ENCODE measurements at regions of chr2 and their contacts with region 1.

Region 1: DNA sequence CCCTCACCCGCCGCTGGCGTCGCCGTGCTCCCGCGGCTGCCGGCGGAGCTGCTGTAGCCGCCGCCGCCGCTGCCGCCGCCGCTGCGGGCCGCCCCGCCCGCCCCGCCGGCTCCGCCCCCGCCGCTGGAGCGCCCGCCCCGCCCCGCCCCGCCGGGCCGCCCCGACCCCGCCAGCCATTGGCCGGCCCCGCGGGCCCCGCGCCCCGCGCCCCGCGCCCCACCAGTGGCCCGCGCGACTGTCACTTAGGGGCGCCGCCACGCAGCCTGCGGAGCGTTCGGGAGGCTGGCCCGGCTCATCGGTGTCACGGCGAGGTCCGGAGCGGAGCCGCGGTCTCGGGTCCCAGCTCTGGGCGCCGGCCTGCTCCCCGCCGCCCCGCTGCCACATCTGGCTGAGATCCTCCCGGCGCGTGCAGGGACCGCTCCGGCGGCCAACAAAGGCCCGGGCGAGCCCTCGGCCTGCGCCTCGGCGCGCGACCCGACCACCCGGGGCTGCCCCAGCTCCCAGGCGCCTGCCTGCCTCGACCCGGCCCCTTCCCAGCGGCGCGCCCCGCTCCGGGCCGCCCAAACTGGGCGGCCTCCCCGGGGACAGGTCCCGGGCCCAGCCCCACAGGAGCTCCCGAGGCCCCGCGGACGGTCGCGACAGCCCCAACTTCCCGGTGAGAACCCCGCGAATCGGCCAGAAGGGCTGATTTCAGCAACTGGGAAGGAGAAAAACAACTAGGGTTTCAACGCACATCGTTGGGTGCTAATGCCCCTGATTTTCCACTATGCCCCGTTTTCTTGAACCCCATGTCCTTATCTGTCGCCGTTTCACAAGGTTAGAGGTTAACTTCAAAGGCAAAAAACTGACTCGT is at the start of gene MGAT4A:
- DNase-seq: peak; percentile 65 to 85
- H3K4me3 ChIP-seq: peak within 1 kb of the TSS; percentile 93 to 94
- H3K27ac ChIP-seq: peak within 1 kb of the TSS; percentile 83 to 88
- H3K4me1 ChIP-seq: peaks cover 0 to 41% (median 18%) of the 10 kb centered on the region in 4 donors
- H3K27me3 ChIP-seq: no peaks in the 10 kb centered on the region
- CTCF ChIP-seq: no peak

Region 2: DNA sequence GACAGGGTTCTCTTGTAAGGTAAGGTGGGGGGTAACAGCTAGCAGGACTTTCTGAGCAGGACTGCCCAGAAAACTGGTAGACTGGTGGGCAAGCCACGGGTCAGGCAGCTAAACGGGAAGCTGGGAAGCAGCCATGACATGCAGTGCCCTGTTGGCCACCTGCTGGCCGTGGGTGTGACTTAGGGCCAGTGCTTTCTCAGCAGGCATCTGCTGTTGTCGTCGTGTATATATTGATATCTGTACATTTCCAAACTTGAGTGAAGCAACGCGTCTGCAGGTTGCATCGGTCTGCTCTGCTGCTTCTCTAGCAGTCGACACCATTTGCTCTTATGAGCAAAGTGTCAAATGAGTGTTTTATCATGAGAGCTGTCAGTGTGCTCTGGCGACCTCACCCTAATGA is 154.0 kb before region 1 on chr2:
- intact Hi-C with region 1: no loop called
- DNase-seq: no peak
- H3K4me3 ChIP-seq: no peak overlapping the region
- H3K27ac ChIP-seq: no peak overlapping the region
- H3K4me1 ChIP-seq: no peaks in the 10 kb centered on the region
- H3K27me3 ChIP-seq: no peaks in the 10 kb centered on the region
- CTCF ChIP-seq: no peak

Region 3: GRCh38 chr2:98614024-98614739 is 117.1 kb before region 1 on chr2:
- intact Hi-C with region 1: loop called (anchors 5 kb)
- DNase-seq: no peak
- H3K4me3 ChIP-seq: no peak overlapping the region
- H3K27ac ChIP-seq: no peak overlapping the region
- H3K4me1 ChIP-seq: peaks cover 0 to 28% (median 21%) of the 10 kb centered on the region in 4 donors
- H3K27me3 ChIP-seq: no peaks in the 10 kb centered on the region
- CTCF ChIP-seq: no peak

Region 4: GRCh38 chr2:98822301-98823164 is 91.3 kb after region 1 on chr2:
- intact Hi-C with region 1: loop called (anchors 10 kb)
- DNase-seq: peak; percentile 35 to 77
- H3K4me3 ChIP-seq: peak overlapping the region; percentile 54 to 68
- H3K27ac ChIP-seq: peak overlapping the region; percentile 73 to 77
- H3K4me1 ChIP-seq: peaks cover 0 to 41% (median 21%) of the 10 kb centered on the region in 4 donors
- H3K27me3 ChIP-seq: no peaks in the 10 kb centered on the region
- CTCF ChIP-seq: peak in 1 of 2 experiments; percentile 40

Measured in tibial artery (tissue), 4 donors.